Left lung (tissue), 14 donors: ENCODE measurements at regions of chr17 and their contacts with region 1.

Region 1: DNA sequence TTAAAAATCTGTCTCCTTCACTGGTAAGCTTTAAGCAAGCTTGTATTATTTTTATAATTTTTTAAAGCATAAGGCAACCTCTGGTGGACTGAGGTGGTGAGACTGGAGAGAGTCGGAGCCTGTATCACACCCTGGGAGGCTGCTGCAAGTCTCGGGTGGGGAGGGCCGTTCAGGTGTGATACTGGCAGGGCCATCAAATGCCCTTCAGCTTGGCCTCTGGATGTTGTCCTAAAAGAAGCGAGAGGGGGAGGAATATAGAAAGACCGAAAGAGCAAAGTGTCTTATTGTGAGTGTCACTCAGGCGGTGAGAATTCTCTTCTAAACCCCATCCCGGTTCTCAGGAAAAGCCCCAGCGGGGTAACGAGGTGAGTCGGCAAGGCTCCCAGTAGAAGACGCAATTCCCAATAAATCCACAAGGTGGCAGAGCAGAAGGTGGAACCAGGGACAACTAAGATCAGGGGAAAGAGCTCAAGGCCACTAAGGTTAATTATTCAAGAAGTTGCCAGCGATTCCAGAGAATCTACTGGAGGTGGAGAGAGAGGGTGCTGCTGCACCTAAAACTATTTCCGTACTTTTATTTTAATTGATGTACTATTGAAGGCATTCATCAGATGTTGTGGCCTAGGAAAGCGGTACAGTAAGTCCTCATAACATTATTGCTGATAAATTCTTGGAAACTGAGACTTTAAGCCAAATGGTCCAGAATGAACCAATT is 14.1 kb downstream of the C17orf67 start:
- DNase-seq: peak in 3 of 4 donors; percentile 47 to 77 (median 62)
- ATAC-seq: peak; percentile 98
- H3K4me3 ChIP-seq: no peak overlapping the region
- H3K27ac ChIP-seq: no peak overlapping the region
- H3K4me1 ChIP-seq: peaks cover 0 to 8% of the 10 kb centered on the region in 2 donors
- H3K27me3 ChIP-seq: no peaks in the 10 kb centered on the region
- CTCF ChIP-seq: peak; percentile 94

Region 2: GRCh38 chr17:56939901-56940343 is 120.3 kb after region 1 on chr17:
- intact Hi-C with region 1: loop called in 1 of 2 experiments (anchors 10 kb)
- DNase-seq: peak in 2 of 4 donors; percentile 40 to 51
- ATAC-seq: peak; percentile 81
- H3K4me3 ChIP-seq: no peak overlapping the region
- H3K27ac ChIP-seq: no peak overlapping the region
- H3K4me1 ChIP-seq: peaks cover 0 to 16% of the 10 kb centered on the region in 2 donors
- H3K27me3 ChIP-seq: no peaks in the 10 kb centered on the region
- CTCF ChIP-seq: peak; percentile 59 to 64

Region 3: GRCh38 chr17:56956992-56957391 is 137.4 kb after region 1 on chr17:
- intact Hi-C with region 1: loop called in 1 of 2 experiments (anchors 10 kb)
- DNase-seq: no peak
- ATAC-seq: no peak
- H3K4me3 ChIP-seq: no peak overlapping the region
- H3K27ac ChIP-seq: no peak overlapping the region
- H3K4me1 ChIP-seq: peaks cover 8 to 27% of the 10 kb centered on the region in 2 donors
- H3K27me3 ChIP-seq: no peaks in the 10 kb centered on the region
- CTCF ChIP-seq: no peak